AG04450 (cell line): ENCODE measurements at regions of chr6 and their contacts with region 1.

Region 1: GRCh38 chr6:150891888-150892485 is 26.5 kb downstream of the MTHFD1L start:
- DNase-seq: peak; percentile 72
- H3K4me3 ChIP-seq: no peak overlapping the region
- H3K27ac ChIP-seq: no peak overlapping the region
- H3K27me3 ChIP-seq: no peaks in the 10 kb centered on the region
- CTCF ChIP-seq: peak; percentile 89

Region 2: GRCh38 chr6:149362289-149362688 is 1529.7 kb before region 1 on chr6:
- CTCF ChIA-PET with region 1: no interaction called
- POLR2A ChIA-PET with region 1: no interaction called
- DNase-seq: no peak
- H3K4me3 ChIP-seq: no peak overlapping the region
- H3K27ac ChIP-seq: no peak overlapping the region
- H3K27me3 ChIP-seq: no peaks in the 10 kb centered on the region
- CTCF ChIP-seq: no peak

Region 3: GRCh38 chr6:150876598-150876997 is 15.4 kb before region 1 on chr6:
- CTCF ChIA-PET with region 1: interaction called, 30 read pairs
- POLR2A ChIA-PET with region 1: interaction called, 3 read pairs
- DNase-seq: no peak
- H3K4me3 ChIP-seq: no peak overlapping the region
- H3K27ac ChIP-seq: no peak overlapping the region
- H3K27me3 ChIP-seq: no peaks in the 10 kb centered on the region
- CTCF ChIP-seq: no peak

Region 4: GRCh38 chr6:150915880-150916265 is 23.9 kb after region 1 on chr6:
- CTCF ChIA-PET with region 1: interaction called, 32 read pairs
- POLR2A ChIA-PET with region 1: no interaction called
- DNase-seq: no peak
- H3K4me3 ChIP-seq: no peak overlapping the region
- H3K27ac ChIP-seq: peak overlapping the region; percentile 43
- H3K27me3 ChIP-seq: no peaks in the 10 kb centered on the region
- CTCF ChIP-seq: no peak

Region 5: GRCh38 chr6:151330134-151330696 is 438.2 kb after region 1 on chr6:
- CTCF ChIA-PET with region 1: interaction called, 178 read pairs
- POLR2A ChIA-PET with region 1: interaction called, 10 read pairs
- DNase-seq: peak; percentile 77
- H3K4me3 ChIP-seq: no peak overlapping the region
- H3K27ac ChIP-seq: no peak overlapping the region
- H3K27me3 ChIP-seq: no peaks in the 10 kb centered on the region
- CTCF ChIP-seq: no peak

Region 6: GRCh38 chr6:151376440-151376839 is 484.5 kb after region 1 on chr6:
- CTCF ChIA-PET with region 1: interaction called, 12 read pairs
- POLR2A ChIA-PET with region 1: no interaction called
- DNase-seq: no peak
- H3K4me3 ChIP-seq: no peak overlapping the region
- H3K27ac ChIP-seq: no peak overlapping the region
- H3K27me3 ChIP-seq: no peaks in the 10 kb centered on the region
- CTCF ChIP-seq: 0 out of 2 replicates have a peak, but pooled peaks have one; percentile 5